A673 (cell line): ENCODE measurements at regions of chr3 and their contacts with region 1.

Region 1: GRCh38 chr3:100590114-100590839 is 19.1 kb upstream of the ADGRG7 start:
- DNase-seq: peak; percentile 83
- H3K4me3 ChIP-seq: no peak overlapping the region
- H3K27ac ChIP-seq: no peak overlapping the region
- H3K4me1 ChIP-seq: peaks cover 5% of the 10 kb centered on the region
- H3K27me3 ChIP-seq: no peaks in the 10 kb centered on the region
- CTCF ChIP-seq: peak; percentile 92

Region 2: DNA sequence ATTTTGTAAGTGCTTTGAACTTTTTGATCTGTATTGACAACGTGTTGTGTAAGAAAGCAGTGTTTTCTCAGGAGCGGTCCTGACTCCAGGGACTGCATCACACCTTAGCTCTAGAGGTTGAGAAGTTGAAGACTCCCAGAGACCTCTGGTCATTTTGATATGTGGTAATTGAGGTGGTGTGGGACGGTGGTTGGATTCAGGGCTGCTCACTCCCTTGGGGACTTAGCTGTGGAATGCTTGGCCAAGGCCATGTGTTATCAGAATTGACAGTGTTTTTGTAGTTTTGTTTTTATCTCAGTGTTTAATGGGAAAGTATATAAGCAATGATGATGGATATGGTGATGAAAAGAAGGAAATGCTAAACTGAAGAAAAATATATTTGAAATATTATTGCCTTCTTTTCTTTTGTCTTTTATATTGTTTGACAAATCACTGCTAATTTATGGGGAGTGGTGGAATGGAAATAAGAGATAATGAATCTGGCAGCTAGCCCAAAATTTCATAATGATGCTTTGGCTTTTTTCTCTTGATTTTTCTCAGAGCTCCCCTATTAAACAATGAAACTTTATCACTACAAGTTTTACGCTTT is 756.6 kb before region 1 on chr3:
- CTCF ChIA-PET with region 1: interaction called, 3 read pairs
- POLR2A ChIA-PET with region 1: no interaction called
- intact Hi-C with region 1: loop called (anchors 5 kb)
- DNase-seq: no peak
- H3K4me3 ChIP-seq: no peak overlapping the region
- H3K27ac ChIP-seq: no peak overlapping the region
- H3K4me1 ChIP-seq: peaks cover 15% of the 10 kb centered on the region
- H3K27me3 ChIP-seq: no peaks in the 10 kb centered on the region
- CTCF ChIP-seq: no peak

Region 3: GRCh38 chr3:100316641-100317069 is 273.6 kb before region 1 on chr3:
- CTCF ChIA-PET with region 1: interaction called, 7 read pairs
- POLR2A ChIA-PET with region 1: no interaction called
- intact Hi-C with region 1: loop called (anchors 1 kb)
- DNase-seq: peak; percentile 77
- H3K4me3 ChIP-seq: no peak overlapping the region
- H3K27ac ChIP-seq: no peak overlapping the region
- H3K4me1 ChIP-seq: peaks cover 3% of the 10 kb centered on the region
- H3K27me3 ChIP-seq: no peaks in the 10 kb centered on the region
- CTCF ChIP-seq: peak; percentile 70